GM12878 (cell line): ENCODE measurements at regions of chr13 and their contacts with region 1.

Region 1: DNA sequence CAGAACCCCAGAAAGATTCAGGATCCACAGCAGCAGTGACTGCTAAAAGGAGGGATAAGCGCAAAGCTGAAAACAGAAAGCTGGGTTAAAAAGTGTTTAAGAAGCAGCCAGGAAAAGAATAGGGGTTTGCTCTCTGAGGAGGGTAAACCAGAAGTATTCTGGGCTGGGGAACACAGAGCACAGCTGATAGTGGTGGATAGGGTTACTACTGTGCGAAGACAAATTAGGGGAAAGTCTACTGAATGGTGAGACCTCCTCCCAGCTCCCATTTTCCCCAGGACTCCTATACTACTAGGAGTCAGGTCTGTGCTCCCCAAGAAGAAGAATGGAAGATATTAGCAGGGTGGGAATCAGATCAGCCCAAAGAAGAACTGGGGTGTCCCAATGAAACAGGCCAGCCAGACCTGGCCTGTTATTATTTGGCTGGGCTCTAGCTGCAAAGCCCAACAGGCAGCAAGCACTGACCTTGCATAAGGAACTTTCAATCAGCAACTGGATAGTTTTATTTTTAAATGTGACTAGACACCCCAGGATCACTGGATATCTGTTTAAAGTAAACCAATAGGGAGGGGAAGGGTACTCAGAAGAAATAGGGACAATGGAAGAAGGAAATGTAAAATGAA is 43.5 kb upstream of the SERTM1 start:
- DNase-seq: no peak
- ATAC-seq: no peak
- H3K4me3 ChIP-seq: no peak overlapping the region
- H3K27ac ChIP-seq: no peak overlapping the region
- H3K4me1 ChIP-seq: no peaks in the 10 kb centered on the region
- H3K27me3 ChIP-seq: no peaks in the 10 kb centered on the region
- CTCF ChIP-seq: no peak
- EP300 ChIP-seq: no peak
- POLR2A ChIP-seq: no peak
- RAD21 ChIP-seq: no peak

Region 2: DNA sequence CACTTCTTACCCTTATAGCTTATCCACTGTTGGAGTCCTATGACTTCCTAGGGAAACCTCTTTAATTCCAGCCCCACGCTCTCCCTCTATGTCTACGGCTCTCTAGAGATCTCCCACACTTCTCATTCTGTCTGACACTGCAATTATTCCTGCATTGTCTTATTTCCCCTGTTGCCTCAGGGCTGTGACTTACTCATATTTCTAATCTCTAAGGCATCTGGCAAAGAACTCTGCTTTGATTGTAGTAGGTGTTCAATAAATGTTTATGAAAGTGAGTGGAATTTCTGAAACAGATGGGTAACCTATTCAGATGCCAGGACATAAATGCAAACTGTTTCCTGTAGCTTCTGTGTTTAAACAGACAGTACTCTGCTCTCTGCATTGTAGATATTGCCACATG is 58.8 kb before region 1 on chr13:
- CTCF ChIA-PET with region 1: no interaction called
- POLR2A ChIA-PET with region 1: no interaction called
- RAD21 ChIA-PET with region 1: no interaction called
- SMC1A ChIA-PET with region 1: no interaction called
- in situ Hi-C with region 1: no loop called
- intact Hi-C with region 1: no loop called
- DNase-seq: no peak
- ATAC-seq: no peak
- H3K4me3 ChIP-seq: no peak overlapping the region
- H3K27ac ChIP-seq: no peak overlapping the region
- H3K4me1 ChIP-seq: no peaks in the 10 kb centered on the region
- H3K27me3 ChIP-seq: no peaks in the 10 kb centered on the region
- CTCF ChIP-seq: no peak
- EP300 ChIP-seq: no peak
- POLR2A ChIP-seq: no peak
- RAD21 ChIP-seq: no peak

Region 3: DNA sequence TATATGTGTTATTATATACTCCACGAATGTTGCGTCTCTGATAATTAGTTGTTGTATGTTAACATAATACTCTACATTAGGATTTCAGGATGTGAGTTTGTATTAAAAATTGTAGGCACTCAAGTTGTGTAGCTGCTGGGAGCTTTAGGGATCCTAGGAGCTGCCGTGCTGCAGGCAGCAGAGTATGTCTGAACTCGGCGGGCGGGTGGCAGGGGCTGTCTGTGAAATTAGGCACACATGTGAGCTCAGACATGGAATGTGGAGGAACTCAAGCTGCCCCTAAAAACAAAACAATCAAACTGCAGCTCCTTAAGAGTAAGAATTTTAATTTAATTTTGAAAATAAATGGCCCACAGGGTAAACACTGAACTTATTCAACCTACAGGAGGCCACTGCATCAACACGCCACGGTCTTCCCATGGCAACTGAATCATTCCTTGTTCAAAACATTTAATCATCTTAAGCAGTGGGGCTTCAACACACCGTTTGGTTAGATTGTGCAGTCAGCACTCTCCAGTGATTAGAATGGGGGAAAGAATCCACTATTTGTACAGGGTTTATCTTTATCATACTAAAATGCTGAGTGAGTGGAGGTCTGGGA is 66.2 kb after region 1 on chr13:
- CTCF ChIA-PET with region 1: no interaction called
- POLR2A ChIA-PET with region 1: no interaction called
- RAD21 ChIA-PET with region 1: no interaction called
- SMC1A ChIA-PET with region 1: no interaction called
- in situ Hi-C with region 1: no loop called
- intact Hi-C with region 1: loop called (anchors 10 kb)
- DNase-seq: no peak
- ATAC-seq: no peak
- H3K4me3 ChIP-seq: no peak overlapping the region
- H3K27ac ChIP-seq: no peak overlapping the region
- H3K4me1 ChIP-seq: no peaks in the 10 kb centered on the region
- H3K27me3 ChIP-seq: no peaks in the 10 kb centered on the region
- CTCF ChIP-seq: no peak
- EP300 ChIP-seq: no peak
- POLR2A ChIP-seq: no peak
- RAD21 ChIP-seq: no peak